Natural killer cell (primary cell): ENCODE measurements at regions of chr1 and their contacts with region 1.

Region 1: GRCh38 chr1:201709564-201710295 is 119.2 kb upstream of the IPO9 start:
- DNase-seq: peak; percentile 41 to 64
- ATAC-seq: peak; percentile 69 to 95 (median 70)
- H3K4me3 ChIP-seq: no peak overlapping the region
- H3K4me3 Mint-ChIP-seq: no peak overlapping the region
- H3K27ac ChIP-seq: no peak overlapping the region
- H3K27ac Mint-ChIP-seq: no peak overlapping the region
- H3K4me1 ChIP-seq: peaks cover 9% of the 10 kb centered on the region
- H3K4me1 Mint-ChIP-seq: no peaks in the 10 kb centered on the region
- H3K27me3 ChIP-seq: no peaks in the 10 kb centered on the region
- H3K27me3 Mint-ChIP-seq: no peaks in the 10 kb centered on the region
- CTCF ChIP-seq: peak; percentile 71

Region 2: DNA sequence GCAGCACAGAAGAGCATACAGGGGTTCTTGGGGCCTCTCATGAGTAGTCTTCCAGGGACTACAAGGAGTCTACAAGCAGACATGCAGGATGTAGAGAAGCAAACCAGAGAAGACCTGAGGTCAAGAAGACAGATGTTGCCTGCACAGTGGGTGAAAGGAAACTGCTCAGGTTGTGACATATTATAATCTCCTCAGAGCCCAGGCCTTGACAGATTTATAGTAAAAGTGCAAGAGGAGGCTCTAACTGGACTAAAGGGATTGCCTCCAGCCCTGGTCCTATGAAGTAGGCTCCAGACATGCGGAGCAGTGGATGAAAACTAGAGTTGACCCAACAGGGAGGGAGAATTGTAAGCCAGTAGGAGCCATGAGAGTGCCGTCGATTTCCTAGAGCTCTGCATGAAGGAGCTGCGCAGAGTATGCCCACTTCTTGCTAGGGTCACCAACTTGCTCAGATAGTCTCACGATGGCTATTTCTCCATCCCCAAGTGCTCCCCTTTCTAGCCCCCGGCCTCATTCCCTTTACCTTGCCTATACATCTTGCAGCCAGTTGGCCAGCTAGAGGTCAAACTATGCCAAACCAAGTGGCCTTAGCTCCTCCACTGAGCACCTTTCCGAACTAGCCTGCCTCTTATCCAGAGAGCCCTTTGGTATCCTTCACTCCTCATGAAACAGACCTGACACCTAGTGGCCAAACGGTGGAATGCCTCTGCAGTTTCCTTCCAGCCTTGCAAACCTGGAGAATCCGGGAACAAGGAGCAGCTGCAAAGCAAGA is 83.0 kb after region 1 on chr1:
- intact Hi-C with region 1: loop called (anchors 1 kb)
- DNase-seq: peak in 1 of 2 donors; percentile 70
- ATAC-seq: peak in 1 of 3 donors; percentile 72
- H3K4me3 ChIP-seq: no peak overlapping the region
- H3K4me3 Mint-ChIP-seq: no peak overlapping the region
- H3K27ac ChIP-seq: no peak overlapping the region
- H3K27ac Mint-ChIP-seq: no peak overlapping the region
- H3K4me1 ChIP-seq: no peaks in the 10 kb centered on the region
- H3K4me1 Mint-ChIP-seq: no peaks in the 10 kb centered on the region
- H3K27me3 ChIP-seq: no peaks in the 10 kb centered on the region
- H3K27me3 Mint-ChIP-seq: peaks cover 7 to 9% of the 10 kb centered on the region in 2 donors
- CTCF ChIP-seq: peak; percentile 85